HepG2 (cell line): ENCODE measurements at regions of chr17 and their contacts with region 1.

Region 1: GRCh38 chr17:15051933-15052332 is 213.2 kb downstream of the PMP22 start:
- DNase-seq: no peak
- ATAC-seq: no peak
- H3K4me3 ChIP-seq: no peak overlapping the region
- H3K27ac ChIP-seq: no peak overlapping the region
- H3K4me1 ChIP-seq: no peaks in the 10 kb centered on the region
- H3K27me3 ChIP-seq: peaks cover 0 to 4% of the 10 kb centered on the region in 2 experiments; a peak in 1 of 5 replicates
- CTCF ChIP-seq: no peak
- EP300 ChIP-seq: no peak
- POLR2A ChIP-seq: no peak
- RAD21 ChIP-seq: no peak

Region 2: DNA sequence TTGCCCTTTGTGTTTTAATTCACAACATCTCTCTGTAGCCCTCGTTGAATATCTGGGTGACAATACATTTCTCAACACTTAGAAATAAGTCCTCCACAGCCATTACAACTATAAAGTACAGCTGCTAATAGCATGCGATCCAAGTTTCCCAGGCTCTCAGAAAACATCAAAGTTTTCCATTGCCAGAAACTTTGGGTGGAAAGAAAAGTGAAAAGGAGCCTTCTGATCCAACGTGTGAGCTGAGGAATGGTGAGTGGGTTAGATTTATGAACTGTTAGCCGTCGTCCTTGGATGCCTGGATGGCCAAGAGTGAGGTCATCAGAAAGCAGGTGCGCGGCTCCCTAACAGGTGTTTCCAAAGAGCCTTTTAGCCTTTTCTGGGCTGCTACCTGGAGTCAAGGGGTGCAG is 44.8 kb before region 1 on chr17:
- CTCF ChIA-PET with region 1: no interaction called
- POLR2A ChIA-PET with region 1: no interaction called
- in situ Hi-C with region 1: no loop called
- intact Hi-C with region 1: no loop called
- DNase-seq: no peak
- ATAC-seq: no peak
- H3K4me3 ChIP-seq: no peak overlapping the region
- H3K27ac ChIP-seq: no peak overlapping the region
- H3K4me1 ChIP-seq: no peaks in the 10 kb centered on the region
- H3K27me3 ChIP-seq: peaks cover 0 to 2% of the 10 kb centered on the region in 2 experiments; a peak in 2 of 5 replicates
- CTCF ChIP-seq: no peak
- EP300 ChIP-seq: no peak
- POLR2A ChIP-seq: no peak
- RAD21 ChIP-seq: no peak

Region 3: DNA sequence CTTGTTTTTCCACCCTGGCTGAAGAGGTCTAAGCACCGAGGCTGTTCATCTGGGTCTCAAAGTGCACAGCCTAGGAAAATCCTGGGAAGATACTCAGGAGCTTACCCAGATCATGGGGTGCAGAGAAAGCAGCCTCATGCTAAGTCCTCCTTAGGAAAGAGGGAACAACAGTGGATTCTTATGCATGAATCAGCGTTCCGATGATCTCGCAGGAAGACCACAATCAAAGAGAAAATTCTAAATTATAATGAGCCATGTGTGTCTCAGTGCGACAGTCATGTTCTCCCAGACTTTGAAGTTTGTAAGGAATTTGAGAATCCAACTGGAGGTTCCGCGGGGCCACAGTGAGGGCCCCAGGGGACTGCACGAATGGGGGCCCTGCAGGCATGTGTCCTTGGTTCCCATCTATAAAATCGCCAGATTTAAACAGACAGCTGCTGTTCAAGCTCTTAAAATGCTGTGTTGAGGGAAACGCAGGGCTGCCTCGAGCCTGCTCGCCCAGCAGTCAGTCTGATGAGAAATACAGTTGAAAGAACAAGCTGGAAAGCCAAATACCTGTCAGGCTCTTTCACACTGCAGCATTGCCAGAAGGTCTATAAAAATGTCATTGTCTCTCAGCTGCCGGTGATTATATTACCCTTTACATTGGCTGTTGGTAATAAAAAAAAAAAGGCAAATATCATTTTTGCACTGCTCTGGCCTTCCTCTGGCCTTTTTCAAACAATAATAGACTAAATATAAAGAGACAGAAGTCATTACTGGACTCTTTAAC is 61.1 kb after region 1 on chr17:
- CTCF ChIA-PET with region 1: no interaction called
- POLR2A ChIA-PET with region 1: no interaction called
- in situ Hi-C with region 1: loop called (anchors 10 kb)
- intact Hi-C with region 1: no loop called
- DNase-seq: no peak
- ATAC-seq: no peak
- H3K4me3 ChIP-seq: no peak overlapping the region
- H3K27ac ChIP-seq: no peak overlapping the region
- H3K4me1 ChIP-seq: no peaks in the 10 kb centered on the region
- H3K27me3 ChIP-seq: peaks cover 2% of the 10 kb centered on the region in 2 experiments; a peak in 2 of 5 replicates
- CTCF ChIP-seq: no peak
- EP300 ChIP-seq: no peak
- POLR2A ChIP-seq: no peak
- RAD21 ChIP-seq: no peak

Region 4: GRCh38 chr17:15171167-15172047 is 119.5 kb after region 1 on chr17:
- CTCF ChIA-PET with region 1: no interaction called
- POLR2A ChIA-PET with region 1: no interaction called
- in situ Hi-C with region 1: no loop called
- intact Hi-C with region 1: no loop called
- DNase-seq: peak; percentile 37
- ATAC-seq: peak; percentile 93
- H3K4me3 ChIP-seq: no peak overlapping the region
- H3K27ac ChIP-seq: no peak overlapping the region
- H3K4me1 ChIP-seq: no peaks in the 10 kb centered on the region
- H3K27me3 ChIP-seq: peaks cover 0 to 15% of the 10 kb centered on the region in 2 experiments; a peak in 3 of 5 replicates
- CTCF ChIP-seq: peak; percentile 78
- EP300 ChIP-seq: no peak
- POLR2A ChIP-seq: no peak
- RAD21 ChIP-seq: peak; percentile 37; the same call in 1 of the 2 replicates